T-cell (primary cell): ENCODE measurements at regions of chr9 and their contacts with region 1.

Region 1: GRCh38 chr9:123914517-123915195 is 15.3 kb downstream of the DENND1A start:
- DNase-seq: no peak
- ATAC-seq: no peak
- H3K4me3 ChIP-seq: no peak overlapping the region
- H3K4me3 Mint-ChIP-seq: no peak overlapping the region
- H3K27ac ChIP-seq: no peak overlapping the region
- H3K27ac Mint-ChIP-seq: peak overlapping the region in 1 of 2 donors; percentile 11
- H3K4me1 ChIP-seq: peaks cover 0 to 2% of the 10 kb centered on the region in 2 experiments
- H3K4me1 Mint-ChIP-seq: peaks cover 6 to 14% (median 7%) of the 10 kb centered on the region in 3 donors
- H3K27me3 ChIP-seq: no peaks in the 10 kb centered on the region
- H3K27me3 Mint-ChIP-seq: no peaks in the 10 kb centered on the region

Region 2: GRCh38 chr9:123631862-123632261 is 282.8 kb before region 1 on chr9:
- CTCF ChIA-PET with region 1: no interaction called
- POLR2A ChIA-PET with region 1: interaction called in 1 of 2 experiments, 14 read pairs
- DNase-seq: no peak
- ATAC-seq: no peak
- H3K4me3 ChIP-seq: no peak overlapping the region
- H3K4me3 Mint-ChIP-seq: no peak overlapping the region
- H3K27ac ChIP-seq: no peak overlapping the region
- H3K27ac Mint-ChIP-seq: no peak overlapping the region
- H3K4me1 ChIP-seq: peaks cover 10% of the 10 kb centered on the region in 2 experiments
- H3K4me1 Mint-ChIP-seq: peaks cover 4 to 14% (median 10%) of the 10 kb centered on the region in 3 donors
- H3K27me3 ChIP-seq: no peaks in the 10 kb centered on the region
- H3K27me3 Mint-ChIP-seq: no peaks in the 10 kb centered on the region